Natural killer cell (primary cell): ENCODE measurements at regions of chr19 and their contacts with region 1.

Region 1: DNA sequence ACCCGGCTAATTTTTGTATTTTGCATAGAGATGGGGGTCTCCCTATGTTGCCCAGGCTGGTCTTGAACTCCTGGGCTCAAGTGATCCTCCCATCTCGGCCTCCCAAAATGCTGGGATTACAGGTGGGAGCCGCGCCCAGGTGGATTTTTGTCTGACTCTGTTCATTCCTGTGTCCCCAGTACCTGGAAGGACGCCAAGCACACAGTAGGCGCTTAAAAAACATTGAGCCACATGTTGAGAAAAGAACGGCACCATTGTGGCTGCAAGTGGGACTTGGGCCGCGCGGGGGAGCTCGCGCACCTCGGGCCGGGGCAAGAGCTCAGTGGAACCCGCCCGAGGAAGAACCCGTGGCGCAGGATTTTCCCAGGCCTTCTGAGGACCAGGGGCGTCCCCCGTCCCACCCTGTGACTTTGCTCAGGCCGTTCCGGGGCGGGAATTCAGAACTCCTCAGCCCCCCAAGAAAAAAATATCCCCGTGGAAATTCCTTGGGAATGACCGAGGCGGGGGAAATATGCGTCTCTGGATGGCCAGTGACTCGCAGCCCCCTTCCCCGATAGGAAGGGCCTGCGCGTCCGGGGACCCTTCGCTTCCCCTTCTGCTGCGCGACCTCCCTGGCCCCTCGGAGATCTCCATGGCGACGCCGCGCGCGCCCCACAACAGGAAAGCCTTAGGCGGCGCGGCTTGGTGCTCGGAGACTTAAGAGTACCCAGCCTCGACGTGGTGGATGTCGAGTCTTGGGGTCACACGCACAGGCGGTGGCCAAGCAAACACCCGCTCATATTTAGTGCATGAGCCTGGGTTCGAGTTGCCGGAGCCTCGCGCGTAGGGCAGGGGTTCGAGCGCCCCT is 1.4 kb upstream of the ICAM1 start:
- DNase-seq: peak; percentile 92 to 93
- ATAC-seq: peak; percentile 56 to 68 (median 58)
- H3K4me3 ChIP-seq: peak overlapping the region; percentile 83
- H3K4me3 Mint-ChIP-seq: peak overlapping the region; percentile 90
- H3K27ac ChIP-seq: peak overlapping the region; percentile 97
- H3K27ac Mint-ChIP-seq: peak overlapping the region; percentile 94 to 96
- H3K4me1 ChIP-seq: peaks cover 40% of the 10 kb centered on the region
- H3K4me1 Mint-ChIP-seq: peaks cover 24 to 39% of the 10 kb centered on the region in 2 donors
- H3K27me3 ChIP-seq: no peaks in the 10 kb centered on the region
- H3K27me3 Mint-ChIP-seq: no peaks in the 10 kb centered on the region
- CTCF ChIP-seq: peak; percentile 89

Region 2: GRCh38 chr19:10237702-10238101 is 31.9 kb before region 1 on chr19:
- intact Hi-C with region 1: loop called (anchors 2 kb)
- DNase-seq: no peak
- ATAC-seq: no peak
- H3K4me3 ChIP-seq: no peak overlapping the region
- H3K4me3 Mint-ChIP-seq: no peak overlapping the region
- H3K27ac ChIP-seq: no peak overlapping the region
- H3K27ac Mint-ChIP-seq: peak overlapping the region; percentile 69 to 76
- H3K4me1 ChIP-seq: peaks cover 30% of the 10 kb centered on the region
- H3K4me1 Mint-ChIP-seq: peaks cover 10 to 18% of the 10 kb centered on the region in 2 donors
- H3K27me3 ChIP-seq: no peaks in the 10 kb centered on the region
- H3K27me3 Mint-ChIP-seq: no peaks in the 10 kb centered on the region
- CTCF ChIP-seq: no peak

Region 3: GRCh38 chr19:10305139-10305806 is 35.7 kb after region 1 on chr19:
- intact Hi-C with region 1: no loop called
- DNase-seq: peak in 1 of 2 donors; percentile 4
- ATAC-seq: no peak
- H3K4me3 ChIP-seq: no peak overlapping the region
- H3K4me3 Mint-ChIP-seq: no peak overlapping the region
- H3K27ac ChIP-seq: no peak overlapping the region
- H3K27ac Mint-ChIP-seq: no peak overlapping the region
- H3K4me1 ChIP-seq: peaks cover 10% of the 10 kb centered on the region
- H3K4me1 Mint-ChIP-seq: no peaks in the 10 kb centered on the region
- H3K27me3 ChIP-seq: no peaks in the 10 kb centered on the region
- H3K27me3 Mint-ChIP-seq: no peaks in the 10 kb centered on the region
- CTCF ChIP-seq: no peak

Region 4: DNA sequence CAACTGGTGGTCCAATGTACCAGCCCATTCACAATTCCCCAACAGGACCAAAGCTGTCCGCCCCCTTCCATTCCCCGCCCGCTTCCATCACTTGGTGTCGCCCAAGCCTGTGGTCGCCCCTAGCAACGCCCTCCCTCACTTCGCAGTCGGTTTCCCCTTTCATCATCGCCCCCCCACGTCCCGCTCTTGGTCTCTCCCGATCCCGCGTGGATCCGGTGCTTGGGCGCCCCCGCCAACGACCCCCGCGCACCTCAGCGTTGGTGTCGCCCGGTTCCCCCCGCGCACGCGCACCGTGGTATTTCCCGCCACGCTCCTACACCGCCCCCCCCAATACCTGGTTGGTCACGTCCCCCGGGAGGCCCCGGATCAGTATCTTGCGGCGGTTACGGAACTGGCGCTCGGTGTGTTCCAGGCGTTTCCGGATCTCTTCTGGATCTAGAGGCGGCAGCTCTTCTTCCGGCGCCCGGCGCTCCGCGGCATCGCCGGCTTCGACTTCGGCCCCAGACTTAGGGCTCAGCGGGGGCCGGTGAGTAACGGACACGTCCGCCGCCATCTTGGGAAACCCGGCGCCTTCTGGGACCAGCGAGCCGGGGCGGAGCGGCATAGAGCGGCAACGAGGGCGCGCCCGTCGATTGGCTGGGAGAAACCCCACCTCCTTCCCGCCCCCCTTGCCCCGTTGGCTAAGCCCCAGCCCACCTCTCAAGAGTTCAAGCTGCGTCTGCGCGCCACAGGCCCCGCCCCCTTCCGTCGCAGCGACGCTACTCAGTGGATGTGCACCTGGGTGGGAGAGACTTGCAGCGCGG is 63.6 kb after region 1 on chr19 and contains the start of gene RAVER1:
- intact Hi-C with region 1: loop called (anchors 2 kb)
- DNase-seq: peak; percentile 96 to 99
- ATAC-seq: peak; percentile 94 to 99 (median 94)
- H3K4me3 ChIP-seq: peak within 1 kb of the TSS; percentile 99
- H3K4me3 Mint-ChIP-seq: peak within 1 kb of the TSS; percentile 96
- H3K27ac ChIP-seq: peak within 1 kb of the TSS; percentile 97
- H3K27ac Mint-ChIP-seq: peak within 1 kb of the TSS; percentile 90 to 96
- H3K4me1 ChIP-seq: peaks cover 30% of the 10 kb centered on the region
- H3K4me1 Mint-ChIP-seq: peaks cover under 1 to 21% of the 10 kb centered on the region in 2 donors
- H3K27me3 ChIP-seq: no peaks in the 10 kb centered on the region
- H3K27me3 Mint-ChIP-seq: no peaks in the 10 kb centered on the region
- CTCF ChIP-seq: no peak
- total RNA-seq, gene RAVER1: 42.5 to 64.3 (median 55.9) TPM

Region 5: DNA sequence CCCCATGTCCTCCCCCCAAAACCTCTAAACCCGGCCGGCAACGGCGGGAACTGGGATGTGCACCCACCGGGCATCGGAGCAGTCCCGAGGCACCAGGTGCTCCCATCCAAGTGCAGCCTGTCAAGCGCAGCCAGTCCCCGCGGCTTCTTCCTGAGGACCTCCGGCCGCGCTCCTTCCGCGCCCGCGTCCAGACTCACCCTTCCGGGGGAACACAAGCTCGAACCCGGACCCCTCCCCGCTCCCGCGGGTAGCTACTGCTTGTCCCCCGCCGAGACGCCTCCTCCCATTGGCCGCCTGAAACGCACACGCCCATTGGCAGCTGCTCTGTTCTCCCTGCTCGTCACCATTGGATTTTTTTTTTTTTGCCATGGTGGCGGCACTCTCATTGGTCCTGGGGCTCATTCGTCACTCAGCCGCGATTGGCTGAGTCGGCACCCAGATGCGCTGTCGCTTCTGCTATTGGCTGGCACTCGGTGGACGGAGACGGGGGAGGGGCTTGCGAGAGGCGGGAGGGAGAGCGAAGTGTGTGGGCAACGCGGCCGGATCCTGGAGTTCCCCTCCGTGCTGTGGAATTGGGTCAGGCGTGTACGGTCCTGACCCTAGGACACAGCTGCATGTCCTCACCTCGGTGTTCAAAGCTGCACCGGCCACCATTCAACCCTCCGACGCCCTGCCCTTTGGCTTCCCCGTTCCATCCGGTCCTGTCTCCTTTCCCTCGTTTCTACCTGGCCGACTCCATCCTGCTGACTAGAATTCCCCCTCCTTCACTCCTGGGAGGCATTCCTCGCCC is 111.0 kb after region 1 on chr19 and contains the start of gene TYK2:
- intact Hi-C with region 1: loop called (anchors 2 kb)
- DNase-seq: peak; percentile 98 to 99
- ATAC-seq: peak; percentile 90 to 97 (median 92)
- H3K4me3 ChIP-seq: peak within 1 kb of the TSS; percentile 92
- H3K4me3 Mint-ChIP-seq: peak within 1 kb of the TSS; percentile 94
- H3K27ac ChIP-seq: peak within 1 kb of the TSS; percentile 93
- H3K27ac Mint-ChIP-seq: peak within 1 kb of the TSS; percentile 97
- H3K4me1 ChIP-seq: peaks cover 20% of the 10 kb centered on the region
- H3K4me1 Mint-ChIP-seq: peaks cover 19 to 26% of the 10 kb centered on the region in 2 donors
- H3K27me3 ChIP-seq: no peaks in the 10 kb centered on the region
- H3K27me3 Mint-ChIP-seq: no peaks in the 10 kb centered on the region
- CTCF ChIP-seq: no peak
- total RNA-seq, gene TYK2: 401 to 469 (median 454) TPM

Region 6: DNA sequence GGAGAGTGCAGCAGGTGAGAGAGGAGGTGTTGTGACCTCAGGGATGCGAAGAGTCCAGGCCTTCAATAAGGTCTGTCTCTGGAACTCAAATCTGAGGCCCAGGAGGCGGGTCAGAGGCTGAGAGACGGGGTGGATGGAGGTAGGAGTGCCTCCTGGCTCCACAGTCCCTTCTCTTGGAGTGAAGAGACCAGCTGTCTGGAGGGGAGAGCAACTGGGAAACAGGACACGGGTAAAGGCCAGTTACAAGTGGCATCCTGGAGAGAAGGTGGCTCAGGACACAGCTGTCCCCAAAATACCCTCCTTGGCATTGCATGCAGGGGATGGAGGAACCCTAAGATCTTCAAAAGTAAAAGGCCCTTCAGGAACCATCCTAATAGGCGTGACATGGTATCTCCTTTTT is 170.0 kb after region 1 on chr19:
- intact Hi-C with region 1: loop called (anchors 5 kb)
- DNase-seq: no peak
- ATAC-seq: no peak
- H3K4me3 ChIP-seq: no peak overlapping the region
- H3K4me3 Mint-ChIP-seq: no peak overlapping the region
- H3K27ac ChIP-seq: no peak overlapping the region
- H3K27ac Mint-ChIP-seq: no peak overlapping the region
- H3K4me1 ChIP-seq: no peaks in the 10 kb centered on the region
- H3K4me1 Mint-ChIP-seq: peaks cover 0 to 4% of the 10 kb centered on the region in 2 donors
- H3K27me3 ChIP-seq: no peaks in the 10 kb centered on the region
- H3K27me3 Mint-ChIP-seq: no peaks in the 10 kb centered on the region
- CTCF ChIP-seq: no peak